GM12878 (cell line): ENCODE measurements at regions of chr10 and their contacts with region 1.

Region 1: GRCh38 chr10:124741281-124741921 is 2.8 kb downstream of the FAM53B start:
- DNase-seq: no peak
- ATAC-seq: peak; percentile 77
- H3K4me3 ChIP-seq: peak overlapping the region; percentile 84
- H3K27ac ChIP-seq: peak overlapping the region; percentile 57
- H3K4me1 ChIP-seq: peaks cover 48% of the 10 kb centered on the region
- H3K27me3 ChIP-seq: no peaks in the 10 kb centered on the region
- CTCF ChIP-seq: peak; percentile 81 to 91 (median 88); a peak in 5 of 6 replicates
- EP300 ChIP-seq: no peak
- POLR2A ChIP-seq: no peak
- RAD21 ChIP-seq: peak; percentile 86

Region 2: GRCh38 chr10:124530215-124530665 is 211.2 kb before region 1 on chr10:
- CTCF ChIA-PET with region 1: interaction called, 149 read pairs
- POLR2A ChIA-PET with region 1: no interaction called
- RAD21 ChIA-PET with region 1: interaction called, 24 read pairs
- SMC1A ChIA-PET with region 1: interaction called, 67 read pairs
- in situ Hi-C with region 1: loop called (anchors 5 kb)
- intact Hi-C with region 1: loop called (anchors 2 kb)
- DNase-seq: no peak
- ATAC-seq: peak; percentile 99
- H3K4me3 ChIP-seq: no peak overlapping the region
- H3K27ac ChIP-seq: no peak overlapping the region
- H3K4me1 ChIP-seq: peaks cover 4% of the 10 kb centered on the region; the same call in 1 of the 2 replicates
- H3K27me3 ChIP-seq: no peaks in the 10 kb centered on the region
- CTCF ChIP-seq: peak; percentile 92 to 98 (median 96); a peak in 5 of 6 replicates
- EP300 ChIP-seq: no peak
- POLR2A ChIP-seq: no peak
- RAD21 ChIP-seq: peak; percentile 99

Region 3: GRCh38 chr10:124575107-124576035 is 166.0 kb before region 1 on chr10:
- CTCF ChIA-PET with region 1: no interaction called
- POLR2A ChIA-PET with region 1: no interaction called
- RAD21 ChIA-PET with region 1: no interaction called
- SMC1A ChIA-PET with region 1: no interaction called
- in situ Hi-C with region 1: no loop called
- intact Hi-C with region 1: no loop called
- DNase-seq: no peak
- ATAC-seq: no peak
- H3K4me3 ChIP-seq: no peak overlapping the region
- H3K27ac ChIP-seq: no peak overlapping the region
- H3K4me1 ChIP-seq: no peaks in the 10 kb centered on the region
- H3K27me3 ChIP-seq: no peaks in the 10 kb centered on the region; a peak in 1 of 4 replicates
- CTCF ChIP-seq: no peak
- EP300 ChIP-seq: no peak
- POLR2A ChIP-seq: no peak
- RAD21 ChIP-seq: no peak

Region 4: DNA sequence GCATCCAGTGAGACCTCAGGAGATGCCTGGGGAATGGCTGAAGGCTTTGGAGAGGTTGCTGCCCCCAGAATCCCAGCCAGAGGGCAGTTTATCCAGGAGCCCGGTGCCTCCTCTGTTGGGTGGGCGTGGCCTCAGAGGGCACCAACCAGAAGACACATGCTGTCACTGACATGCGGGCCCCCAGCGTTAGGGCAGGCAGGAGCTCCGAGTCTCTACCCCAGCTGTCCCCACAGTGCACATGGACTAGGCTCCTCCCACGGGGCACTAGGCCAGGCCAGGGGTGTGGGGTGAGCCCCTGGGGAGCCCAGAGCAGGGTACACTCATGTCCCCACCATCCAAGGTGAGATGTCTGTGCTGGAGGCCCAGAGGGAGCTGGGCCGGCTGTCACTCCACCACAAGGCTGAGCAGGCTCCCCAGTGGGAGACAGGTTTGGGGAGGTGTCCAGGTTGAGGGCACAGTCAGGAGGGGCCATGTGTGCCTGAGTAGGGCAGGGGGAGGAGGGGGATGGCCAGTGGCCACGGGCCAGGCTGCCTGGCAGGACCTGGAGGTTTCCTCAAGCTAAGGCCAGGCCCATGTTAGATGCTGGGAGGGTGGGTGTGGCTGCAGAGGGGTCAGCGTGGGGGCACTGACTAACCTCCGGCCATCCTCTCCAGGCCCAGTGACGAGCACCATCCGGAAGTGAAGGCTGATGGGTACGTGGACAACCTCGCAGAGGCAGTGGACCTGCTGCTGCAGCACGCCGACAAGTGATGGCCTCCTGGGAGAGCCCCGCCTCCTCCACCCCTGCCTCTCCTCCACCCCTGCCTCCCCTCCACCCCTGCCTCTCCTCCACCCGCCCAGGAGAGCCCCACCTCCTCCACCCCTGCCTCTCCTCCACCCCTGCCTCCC is 128.5 kb before region 1 on chr10:
- CTCF ChIA-PET with region 1: interaction called, 13 read pairs
- POLR2A ChIA-PET with region 1: interaction called, 3 read pairs
- RAD21 ChIA-PET with region 1: interaction called, 6 read pairs
- SMC1A ChIA-PET with region 1: interaction called, 4 read pairs
- in situ Hi-C with region 1: no loop called
- intact Hi-C with region 1: loop called (anchors 5 kb)
- DNase-seq: no peak
- ATAC-seq: peak; percentile 8
- H3K4me3 ChIP-seq: no peak overlapping the region
- H3K27ac ChIP-seq: no peak overlapping the region
- H3K4me1 ChIP-seq: peaks cover 46% of the 10 kb centered on the region
- H3K27me3 ChIP-seq: no peaks in the 10 kb centered on the region
- CTCF ChIP-seq: no peak
- EP300 ChIP-seq: no peak
- POLR2A ChIP-seq: no peak
- RAD21 ChIP-seq: no peak

Region 5: GRCh38 chr10:124641282-124642087 is 99.9 kb before region 1 on chr10:
- CTCF ChIA-PET with region 1: interaction called, 73 read pairs
- POLR2A ChIA-PET with region 1: no interaction called
- RAD21 ChIA-PET with region 1: interaction called, 14 read pairs
- SMC1A ChIA-PET with region 1: interaction called, 81 read pairs
- in situ Hi-C with region 1: no loop called
- intact Hi-C with region 1: loop called (anchors 5 kb)
- DNase-seq: peak; percentile 32
- ATAC-seq: peak; percentile 75
- H3K4me3 ChIP-seq: peak overlapping the region; percentile 1; the same call in 1 of the 2 replicates
- H3K27ac ChIP-seq: peak overlapping the region; percentile 75
- H3K4me1 ChIP-seq: peaks cover 24% of the 10 kb centered on the region
- H3K27me3 ChIP-seq: no peaks in the 10 kb centered on the region
- CTCF ChIP-seq: no peak
- EP300 ChIP-seq: peak in 1 of 2 experiments; percentile 66; a peak in 1 of 4 replicates
- POLR2A ChIP-seq: no peak
- RAD21 ChIP-seq: no peak

Region 6: GRCh38 chr10:124688889-124689670 is 52.3 kb before region 1 on chr10:
- CTCF ChIA-PET with region 1: interaction called, 106 read pairs
- POLR2A ChIA-PET with region 1: interaction called, 46 read pairs
- RAD21 ChIA-PET with region 1: interaction called, 130 read pairs
- SMC1A ChIA-PET with region 1: interaction called, 133 read pairs
- in situ Hi-C with region 1: no loop called
- intact Hi-C with region 1: loop called (anchors 2 kb)
- DNase-seq: peak; percentile 93
- ATAC-seq: peak; percentile 96
- H3K4me3 ChIP-seq: no peak overlapping the region
- H3K27ac ChIP-seq: peak overlapping the region; percentile 56
- H3K4me1 ChIP-seq: peaks cover 53% of the 10 kb centered on the region
- H3K27me3 ChIP-seq: no peaks in the 10 kb centered on the region
- CTCF ChIP-seq: no peak
- EP300 ChIP-seq: peak; percentile 90 to 95
- POLR2A ChIP-seq: no peak
- RAD21 ChIP-seq: peak; percentile 31; the same call in 1 of the 2 replicates

Region 7: GRCh38 chr10:124755581-124755980 is 14.2 kb after region 1 on chr10:
- CTCF ChIA-PET with region 1: interaction called, 44 read pairs
- POLR2A ChIA-PET with region 1: no interaction called
- RAD21 ChIA-PET with region 1: interaction called, 5 read pairs
- SMC1A ChIA-PET with region 1: interaction called, 12 read pairs
- in situ Hi-C with region 1: no loop called
- intact Hi-C with region 1: no loop called
- DNase-seq: no peak
- ATAC-seq: no peak
- H3K4me3 ChIP-seq: no peak overlapping the region
- H3K27ac ChIP-seq: no peak overlapping the region
- H3K4me1 ChIP-seq: no peaks in the 10 kb centered on the region
- H3K27me3 ChIP-seq: no peaks in the 10 kb centered on the region
- CTCF ChIP-seq: no peak
- EP300 ChIP-seq: no peak
- POLR2A ChIP-seq: no peak
- RAD21 ChIP-seq: no peak

Region 8: GRCh38 chr10:125222515-125223308 is 481.3 kb after region 1 on chr10:
- CTCF ChIA-PET with region 1: no interaction called
- POLR2A ChIA-PET with region 1: no interaction called
- RAD21 ChIA-PET with region 1: no interaction called
- SMC1A ChIA-PET with region 1: no interaction called
- in situ Hi-C with region 1: no loop called
- intact Hi-C with region 1: no loop called
- DNase-seq: no peak
- ATAC-seq: no peak
- H3K4me3 ChIP-seq: no peak overlapping the region
- H3K27ac ChIP-seq: no peak overlapping the region
- H3K4me1 ChIP-seq: no peaks in the 10 kb centered on the region
- H3K27me3 ChIP-seq: no peaks in the 10 kb centered on the region; a peak in 1 of 4 replicates
- CTCF ChIP-seq: no peak
- EP300 ChIP-seq: no peak
- POLR2A ChIP-seq: no peak
- RAD21 ChIP-seq: no peak